ENCODE measurements at regions of chr18 and their contacts with region 1.

Region 1: DNA sequence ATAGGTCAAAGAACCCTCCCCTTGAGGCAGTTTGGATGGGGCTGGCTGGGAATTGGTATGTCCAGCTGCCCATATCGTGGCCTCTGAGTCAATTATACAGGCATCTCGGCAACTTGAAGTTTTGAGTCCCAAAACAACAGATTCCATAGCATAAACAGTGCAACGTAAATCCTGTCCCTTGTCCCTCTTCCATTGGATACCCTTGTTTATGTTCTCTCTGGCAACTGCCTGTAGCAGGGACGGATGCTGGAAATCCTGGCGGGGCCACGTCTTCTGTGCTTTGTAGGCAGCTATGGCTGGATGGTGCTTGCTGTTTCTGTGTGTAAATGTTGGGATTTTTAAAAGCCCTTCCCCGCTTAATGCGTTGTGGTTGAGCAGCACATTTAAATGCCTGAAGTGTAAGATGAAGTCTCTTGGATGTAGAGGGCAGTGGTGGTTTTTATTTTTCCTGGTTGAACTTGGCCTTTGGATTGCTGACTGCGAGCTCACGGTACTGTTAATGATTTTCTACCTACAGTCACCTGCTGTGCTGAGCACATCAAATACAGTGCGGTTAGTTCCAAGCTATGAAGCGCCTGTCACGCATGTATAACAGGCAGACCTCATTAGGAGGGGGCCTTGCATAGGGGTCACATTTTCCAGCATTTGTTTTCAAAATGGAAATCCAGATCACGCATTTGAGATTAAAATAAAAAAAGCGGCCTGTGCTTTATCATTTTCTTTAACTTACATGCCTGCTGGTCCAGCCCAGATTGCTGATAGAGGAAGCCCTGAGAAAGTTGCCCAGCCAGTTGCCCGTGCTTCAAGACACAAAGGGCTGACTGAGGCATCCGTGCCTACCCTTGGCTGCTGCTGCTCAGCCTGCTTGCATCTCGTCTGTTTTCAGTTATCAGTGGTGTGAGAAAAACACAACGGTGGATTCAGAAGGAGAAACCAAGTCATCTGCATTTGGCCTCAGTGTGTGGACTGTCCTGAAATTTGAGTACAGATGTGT is 84.7 kb downstream of the NEDD4L start:
- DNase-seq: no peak
- H3K4me3 ChIP-seq: no peak overlapping the region
- H3K27ac ChIP-seq: no peak overlapping the region
- H3K4me1 ChIP-seq: peaks cover 0 to 6% (median 2%) of the 10 kb centered on the region in 4 donors
- H3K27me3 ChIP-seq: no peaks in the 10 kb centered on the region
- CTCF ChIP-seq: no peak
- EP300 ChIP-seq: no peak
- POLR2A ChIP-seq: no peak

Region 2: GRCh38 chr18:57630002-57630753 is 498.5 kb before region 1 on chr18:
- intact Hi-C with region 1: loop called (anchors 10 kb)
- DNase-seq: peak; percentile 99
- H3K4me3 ChIP-seq: peak overlapping the region; percentile 65 to 85 (median 68)
- H3K27ac ChIP-seq: peak overlapping the region; percentile 75 to 79 (median 77)
- H3K4me1 ChIP-seq: peaks cover 10 to 21% (median 18%) of the 10 kb centered on the region in 4 donors
- H3K27me3 ChIP-seq: no peaks in the 10 kb centered on the region
- CTCF ChIP-seq: peak; percentile 76 to 85 (median 82)
- EP300 ChIP-seq: no peak
- POLR2A ChIP-seq: no peak

Region 3: DNA sequence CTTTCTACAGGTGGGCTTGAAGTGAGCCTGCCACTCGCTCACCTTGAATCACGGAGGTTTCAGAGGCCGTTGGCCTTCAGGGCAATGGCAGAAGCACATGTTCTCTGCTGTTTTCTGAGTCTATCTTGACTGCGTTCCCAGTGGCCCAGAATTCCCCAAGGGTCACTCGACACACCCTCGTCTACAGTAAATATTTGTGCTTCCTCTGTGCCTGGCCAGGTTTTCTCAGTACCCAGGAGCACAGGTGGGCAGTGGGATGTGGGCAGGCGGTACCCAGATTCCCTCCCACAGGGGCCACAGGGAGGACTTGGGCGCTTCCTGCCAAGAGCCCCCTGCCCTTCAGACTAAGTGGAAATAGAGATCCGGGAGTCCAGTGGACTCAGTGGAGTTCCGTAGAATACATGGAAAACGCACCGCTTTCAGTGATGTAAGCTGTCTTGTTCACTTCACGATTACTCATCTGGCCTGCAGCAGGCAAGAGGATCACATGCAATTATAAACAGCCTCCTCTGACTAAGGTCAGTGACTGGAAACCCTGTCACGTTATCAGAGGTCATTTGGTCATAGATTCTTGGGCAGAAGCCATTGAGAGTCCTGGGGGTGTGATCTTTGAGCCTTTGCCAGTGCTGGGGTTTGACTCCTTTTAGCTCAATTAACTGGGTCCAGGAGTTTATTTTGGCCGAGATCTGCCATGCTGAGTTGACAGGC is 95.2 kb after region 1 on chr18:
- intact Hi-C with region 1: no loop called
- DNase-seq: peak; percentile 90
- H3K4me3 ChIP-seq: peak overlapping the region in 1 of 4 donors; percentile 24
- H3K27ac ChIP-seq: peak overlapping the region; percentile 59 to 72 (median 64)
- H3K4me1 ChIP-seq: peaks cover 16 to 44% (median 22%) of the 10 kb centered on the region in 4 donors
- H3K27me3 ChIP-seq: no peaks in the 10 kb centered on the region
- CTCF ChIP-seq: no peak
- EP300 ChIP-seq: no peak
- POLR2A ChIP-seq: no peak

Measured in esophagus muscularis mucosa (tissue), 4 donors.